HEK293T (cell line): ENCODE measurements at regions of chr11 and their contacts with region 1.

Region 1: GRCh38 chr11:83156150-83156995 is 558 bp upstream of the PCF11 start:
- DNase-seq: peak; percentile 94

Region 2: DNA sequence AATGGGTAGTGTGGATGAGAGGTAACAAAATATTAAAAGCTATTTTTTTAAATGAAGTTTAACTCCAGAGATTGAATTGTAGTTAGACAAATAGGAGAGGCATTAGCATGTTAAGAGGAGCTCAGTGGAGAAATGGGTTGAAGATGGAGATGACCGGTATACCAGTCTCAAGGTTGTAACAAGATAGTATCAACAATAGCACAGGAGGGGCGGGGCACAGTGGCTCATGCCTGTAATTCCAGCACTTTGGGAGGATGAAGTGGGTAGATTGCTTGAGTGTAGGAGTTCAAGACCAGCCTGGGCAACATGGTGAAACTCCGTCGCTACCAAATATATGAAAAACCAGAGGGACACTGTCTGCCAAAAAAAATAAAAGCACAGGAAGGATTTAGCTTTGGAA is 31.1 kb after region 1 on chr11:
- CTCF ChIA-PET with region 1: no interaction called
- POLR2A ChIA-PET with region 1: interaction called, 13 read pairs
- DNase-seq: no peak